ENCODE measurements at regions of chr2 and their contacts with region 1.

Region 1: GRCh38 chr2:69559442-69560146 is 83.9 kb downstream of the AAK1 start:
- DNase-seq: no peak
- ATAC-seq: peak; percentile 73 to 77
- H3K4me3 ChIP-seq: no peak overlapping the region
- H3K27ac ChIP-seq: no peak overlapping the region
- H3K4me1 ChIP-seq: peaks cover 6% of the 10 kb centered on the region
- H3K27me3 ChIP-seq: no peaks in the 10 kb centered on the region

Region 2: DNA sequence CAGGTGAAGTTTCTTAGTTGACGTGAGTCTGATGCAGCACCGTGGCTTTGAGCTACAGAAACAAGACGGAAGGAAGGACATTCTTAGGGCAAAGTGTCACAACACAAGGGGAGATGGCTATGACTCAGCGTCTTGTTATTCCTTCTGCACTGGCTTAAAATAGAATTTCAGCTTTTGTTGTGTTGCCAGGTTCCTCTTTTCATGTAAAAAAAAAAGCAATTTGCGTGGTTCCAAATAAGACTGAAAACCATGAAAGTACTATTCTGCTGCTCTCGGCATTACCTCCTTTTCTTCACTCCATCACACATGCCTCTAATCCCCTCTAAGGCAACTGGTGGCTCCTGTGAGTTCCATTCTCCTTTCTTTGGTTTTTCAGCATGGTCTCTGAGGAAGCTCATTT is 396.5 kb before region 1 on chr2:
- intact Hi-C with region 1: no loop called
- DNase-seq: no peak
- ATAC-seq: peak; percentile 47 to 75
- H3K4me3 ChIP-seq: no peak overlapping the region
- H3K27ac ChIP-seq: peak overlapping the region; percentile 40
- H3K4me1 ChIP-seq: peaks cover 5% of the 10 kb centered on the region
- H3K27me3 ChIP-seq: no peaks in the 10 kb centered on the region

Region 3: DNA sequence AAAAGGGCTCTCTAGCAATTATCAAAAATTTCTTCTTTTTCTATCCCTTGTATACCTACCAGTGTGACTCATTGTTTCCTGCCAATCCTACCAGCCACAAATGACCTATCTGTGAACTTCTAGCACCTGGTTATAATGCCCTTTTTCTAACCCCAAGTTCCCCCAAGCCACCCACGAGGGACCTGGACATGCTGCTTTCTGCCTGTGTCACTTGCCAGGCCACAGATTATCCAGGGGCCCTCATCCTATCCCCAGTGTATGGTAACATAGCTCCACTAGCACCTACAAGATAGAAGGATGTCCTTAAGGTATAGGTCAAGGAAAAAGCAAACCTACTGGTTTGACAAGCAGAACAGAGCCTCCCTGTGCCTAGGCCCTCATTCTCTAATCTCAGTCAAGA is 57.2 kb after region 1 on chr2:
- intact Hi-C with region 1: no loop called
- DNase-seq: no peak
- ATAC-seq: no peak
- H3K4me3 ChIP-seq: no peak overlapping the region
- H3K27ac ChIP-seq: no peak overlapping the region
- H3K4me1 ChIP-seq: peaks cover 20% of the 10 kb centered on the region
- H3K27me3 ChIP-seq: no peaks in the 10 kb centered on the region

Region 4: GRCh38 chr2:69717861-69718273 is 158.3 kb after region 1 on chr2:
- intact Hi-C with region 1: loop called (anchors 2 to 5 kb)
- DNase-seq: no peak
- ATAC-seq: no peak
- H3K4me3 ChIP-seq: no peak overlapping the region
- H3K27ac ChIP-seq: no peak overlapping the region
- H3K4me1 ChIP-seq: no peaks in the 10 kb centered on the region
- H3K27me3 ChIP-seq: no peaks in the 10 kb centered on the region

Measured in right cardiac atrium (tissue), 5 donors.